ENCODE measurements at regions of chr7 and their contacts with region 1.

Region 1: GRCh38 chr7:142587578-142588191 is 161.6 kb upstream of the PRSS1 start:
- DNase-seq: no peak
- H3K4me3 Mint-ChIP-seq: no peak overlapping the region
- H3K27ac Mint-ChIP-seq: no peak overlapping the region
- H3K4me1 Mint-ChIP-seq: peaks cover 22% of the 10 kb centered on the region
- H3K27me3 Mint-ChIP-seq: no peaks in the 10 kb centered on the region

Region 2: GRCh38 chr7:142077762-142078161 is 509.9 kb before region 1 on chr7:
- intact Hi-C with region 1: no loop called
- DNase-seq: no peak
- H3K4me3 Mint-ChIP-seq: no peak overlapping the region
- H3K27ac Mint-ChIP-seq: no peak overlapping the region
- H3K4me1 Mint-ChIP-seq: no peaks in the 10 kb centered on the region
- H3K27me3 Mint-ChIP-seq: peaks cover 5% of the 10 kb centered on the region

Region 3: DNA sequence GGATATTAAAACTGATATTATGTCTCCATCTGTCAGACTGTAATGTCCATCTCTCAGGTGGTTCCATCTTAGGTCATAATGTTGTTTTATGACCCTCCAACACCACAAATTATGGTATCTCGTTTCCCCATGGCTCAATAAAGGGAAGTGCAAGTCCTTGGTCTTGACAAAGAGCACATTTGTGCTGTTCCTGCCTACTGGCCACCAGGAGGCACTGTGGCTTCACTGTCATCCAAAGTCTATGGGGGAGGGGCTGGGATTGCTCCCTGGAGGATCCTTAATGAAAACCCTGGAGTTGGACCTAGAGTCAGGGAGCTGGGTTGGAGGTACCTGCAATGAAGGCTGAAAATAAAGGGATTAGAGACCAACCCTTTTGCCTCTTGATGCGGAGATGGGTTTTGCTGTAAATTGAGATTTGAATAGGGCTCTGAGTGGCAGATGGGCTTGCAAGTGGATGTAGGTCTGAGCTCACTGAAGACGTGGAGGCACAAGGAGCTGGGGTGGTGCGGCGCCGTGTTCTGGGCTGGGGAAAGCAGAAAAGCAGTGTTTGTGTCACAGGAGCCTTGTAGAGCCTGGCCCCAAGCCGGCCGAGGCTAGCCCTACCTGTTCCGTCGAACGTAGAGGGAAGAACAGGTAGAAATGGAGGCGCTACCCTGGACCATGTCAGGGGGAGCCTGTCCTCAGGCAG is 149.3 kb before region 1 on chr7:
- intact Hi-C with region 1: no loop called
- DNase-seq: no peak
- H3K4me3 Mint-ChIP-seq: no peak overlapping the region
- H3K27ac Mint-ChIP-seq: no peak overlapping the region
- H3K4me1 Mint-ChIP-seq: peaks cover 53% of the 10 kb centered on the region
- H3K27me3 Mint-ChIP-seq: peaks cover 2% of the 10 kb centered on the region

Region 4: DNA sequence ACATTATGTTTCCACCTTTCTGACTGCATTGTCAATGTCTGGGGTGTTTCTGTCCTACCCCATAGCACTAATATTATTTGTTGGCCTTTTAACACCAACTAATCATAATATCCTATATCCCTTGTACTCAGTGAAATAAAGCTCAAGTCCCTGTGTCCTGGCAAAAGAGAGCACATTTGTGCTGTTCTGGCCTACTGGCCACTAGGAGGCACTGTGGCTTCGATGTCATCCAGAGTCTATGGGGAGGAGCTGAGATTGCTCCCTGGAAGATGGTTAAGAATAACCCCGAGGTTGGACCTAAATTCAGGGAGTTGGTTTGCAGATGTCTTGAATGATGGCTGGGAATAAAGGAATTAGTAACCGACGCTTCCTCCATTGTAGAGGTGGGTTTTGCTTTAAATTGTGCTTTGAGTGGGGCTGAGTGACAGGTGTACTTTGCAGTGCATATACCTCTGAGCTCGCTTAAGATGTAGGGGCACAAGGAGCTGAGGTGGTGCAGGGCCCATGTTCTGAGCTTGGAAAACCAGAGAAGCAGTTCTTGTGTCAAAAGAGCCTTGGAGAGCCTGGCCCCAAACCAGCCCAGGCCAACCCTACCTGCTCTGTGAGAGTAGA is 29.6 kb before region 1 on chr7:
- intact Hi-C with region 1: loop called (anchors 1 kb)
- DNase-seq: peak; percentile 31
- H3K4me3 Mint-ChIP-seq: peak overlapping the region; percentile 6
- H3K27ac Mint-ChIP-seq: no peak overlapping the region
- H3K4me1 Mint-ChIP-seq: peaks cover 19% of the 10 kb centered on the region
- H3K27me3 Mint-ChIP-seq: peaks cover 12% of the 10 kb centered on the region